Activated naive CD8-positive, alpha-beta T cell treated with anti-CD3 and anti-CD28 coated beads, Interleukin-2, amount 10 ng/mL, durations not matched to agents 7 days and 5 days (primary cell): ENCODE measurements at regions of chr19 and their contacts with region 1.

Region 1: DNA sequence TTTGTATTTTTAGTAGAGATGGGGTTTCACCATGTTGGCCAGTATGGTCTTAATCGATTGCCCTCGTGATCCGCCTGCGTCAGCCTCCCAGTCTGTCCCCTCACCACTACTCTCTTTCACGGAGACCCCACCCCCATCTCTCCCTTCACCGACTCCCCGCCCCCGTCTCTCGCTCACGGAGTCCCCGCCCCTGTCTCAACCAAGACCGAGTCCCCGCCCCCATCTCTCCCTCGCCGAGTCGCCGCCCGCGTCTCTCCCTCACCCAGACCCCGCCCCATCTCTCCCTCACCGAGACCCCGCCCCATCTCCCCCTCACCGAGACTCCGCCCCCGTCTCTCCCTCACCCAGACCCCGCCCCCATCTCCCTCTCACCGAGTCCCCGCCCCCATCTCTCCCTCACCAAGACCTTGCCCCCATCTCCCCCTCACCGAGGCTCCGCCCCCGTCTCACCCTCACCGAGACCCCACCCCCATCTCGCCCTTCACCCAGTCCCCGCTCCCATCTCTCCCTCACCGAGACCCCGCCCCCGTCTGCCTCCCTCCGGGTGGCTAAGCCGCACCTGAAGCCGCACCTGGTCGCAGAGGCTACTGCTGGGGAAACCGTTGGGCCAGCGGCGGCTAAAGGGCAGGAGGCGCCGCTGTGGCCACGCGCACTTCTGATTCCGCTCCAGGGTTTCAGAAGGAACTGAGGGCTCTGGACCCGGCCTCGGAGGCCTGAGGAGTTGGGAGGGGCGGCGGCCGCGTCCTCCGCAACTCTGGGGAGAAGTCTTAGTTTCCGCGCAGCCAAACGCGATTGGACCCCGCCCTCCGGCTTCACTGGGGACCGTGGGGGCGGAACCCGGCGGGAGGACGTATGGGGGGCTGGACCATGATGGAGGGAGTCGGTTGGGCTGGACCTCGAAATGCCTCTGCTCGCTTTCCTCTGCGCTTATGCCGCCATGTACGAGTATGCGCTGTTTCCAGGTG is 17.1 kb upstream of the ZNF846 start:
- DNase-seq: peak; percentile 94
- ATAC-seq: peak; percentile 87
- H3K4me3 Mint-ChIP-seq: peak overlapping the region; percentile 93
- H3K27ac Mint-ChIP-seq: peak overlapping the region; percentile 100
- H3K4me1 Mint-ChIP-seq: peaks cover 24% of the 10 kb centered on the region
- H3K27me3 Mint-ChIP-seq: no peaks in the 10 kb centered on the region

Region 2: DNA sequence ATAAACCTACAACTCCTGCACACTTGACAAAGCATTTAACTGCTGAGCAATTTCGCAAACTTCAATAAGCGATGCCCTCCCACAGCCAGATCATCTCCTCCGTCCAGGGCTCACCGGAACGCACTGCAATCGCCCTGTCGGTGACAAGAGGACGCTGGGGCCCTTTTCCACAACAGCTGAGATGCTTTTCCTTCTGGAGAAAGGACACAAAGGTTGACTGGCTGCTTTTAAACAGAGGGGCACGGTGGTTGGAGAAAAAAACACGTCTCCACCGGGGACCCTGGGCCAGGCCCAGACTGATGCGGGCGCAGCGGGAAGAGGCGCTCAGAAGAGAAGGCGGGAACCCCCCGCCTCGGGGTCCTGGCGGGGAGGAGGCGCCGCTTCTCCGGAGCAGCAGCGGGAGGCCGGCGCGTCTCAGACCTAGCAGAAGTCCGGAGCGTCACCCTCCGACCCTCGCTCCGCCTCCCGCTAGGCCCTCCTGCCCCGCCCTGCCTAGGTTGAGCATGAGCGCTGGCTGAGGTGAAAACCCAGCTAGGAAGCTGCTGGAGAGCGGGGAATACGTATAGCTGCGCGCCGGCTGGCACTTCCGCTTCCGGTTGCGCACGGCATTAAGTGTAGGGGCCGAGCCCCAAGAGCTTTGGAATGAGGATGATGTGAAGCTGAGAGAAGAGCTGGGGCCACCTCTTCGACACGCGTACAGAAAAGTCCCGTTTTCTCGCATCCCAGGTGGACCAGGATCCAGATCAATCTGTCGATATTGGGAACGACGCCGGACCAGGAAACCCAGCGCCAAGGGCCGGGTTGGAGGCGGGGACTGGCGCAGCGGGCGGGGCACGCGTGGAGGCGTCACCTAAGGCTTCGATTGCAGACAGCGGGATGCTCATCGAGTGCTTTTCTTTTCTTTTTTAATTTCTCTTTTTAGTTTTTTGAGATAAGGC is 17.2 kb before region 1 on chr19 and contains the start of gene ZNF846:
- POLR2A ChIA-PET with region 1: interaction called, 10 read pairs
- DNase-seq: peak; percentile 92
- ATAC-seq: peak; percentile 96
- H3K4me3 Mint-ChIP-seq: peak within 1 kb of the TSS; percentile 92
- H3K27ac Mint-ChIP-seq: peak within 1 kb of the TSS; percentile 97
- H3K4me1 Mint-ChIP-seq: peaks cover 2% of the 10 kb centered on the region
- H3K27me3 Mint-ChIP-seq: no peaks in the 10 kb centered on the region
- total RNA-seq, gene ZNF846: 17.9 to 21.1 TPM